Heart left ventricle (tissue), 16 donors: ENCODE measurements at regions of chr17 and their contacts with region 1.

Region 1: GRCh38 chr17:29579866-29580771 is 9.3 kb downstream of the GIT1 start:
- DNase-seq: peak; percentile 79 to 90 (median 85)
- ATAC-seq: peak; percentile 59 to 80 (median 74)
- H3K4me3 ChIP-seq: no peak overlapping the region
- H3K27ac ChIP-seq: peak overlapping the region in 1 of 12 donors; percentile 5
- H3K4me1 ChIP-seq: peaks cover 0 to 43% (median 23%) of the 10 kb centered on the region in 12 donors
- H3K27me3 ChIP-seq: no peaks in the 10 kb centered on the region
- CTCF ChIP-seq: peak; percentile 80 to 95 (median 90)
- POLR2A ChIP-seq: no peak

Region 2: GRCh38 chr17:29611311-29612053 is 31.4 kb after region 1 on chr17:
- intact Hi-C with region 1: loop called in 3 of 10 experiments (anchors 2 to 5 kb)
- DNase-seq: peak in 1 of 5 donors; percentile 46
- ATAC-seq: no peak
- H3K4me3 ChIP-seq: no peak overlapping the region
- H3K27ac ChIP-seq: no peak overlapping the region
- H3K4me1 ChIP-seq: peaks cover 3 to 39% (median 27%) of the 10 kb centered on the region in 12 donors
- H3K27me3 ChIP-seq: no peaks in the 10 kb centered on the region
- CTCF ChIP-seq: no peak
- POLR2A ChIP-seq: no peak

Region 3: GRCh38 chr17:29622337-29623282 is 42.5 kb after region 1 on chr17 and contains the start of gene CORO6:
- intact Hi-C with region 1: loop called in 2 of 10 experiments (anchors 5 kb)
- DNase-seq: peak; percentile 64 to 85 (median 81)
- ATAC-seq: peak; percentile 53 to 71 (median 70)
- H3K4me3 ChIP-seq: peak within 1 kb of the TSS; percentile 51 to 83 (median 72)
- H3K27ac ChIP-seq: peak within 1 kb of the TSS; percentile 28 to 98 (median 88)
- H3K4me1 ChIP-seq: peaks cover 3 to 70% (median 40%) of the 10 kb centered on the region in 12 donors
- H3K27me3 ChIP-seq: no peaks in the 10 kb centered on the region
- CTCF ChIP-seq: no peak
- POLR2A ChIP-seq: peak; percentile 41 to 83
- total RNA-seq, gene CORO6: 72.1 to 115 (median 95.5) TPM

Region 4: GRCh38 chr17:29777663-29778062 is 197.5 kb after region 1 on chr17:
- intact Hi-C with region 1: loop called in 3 of 10 experiments (anchors 5 kb)
- DNase-seq: no peak
- ATAC-seq: no peak
- H3K4me3 ChIP-seq: no peak overlapping the region
- H3K27ac ChIP-seq: no peak overlapping the region
- H3K4me1 ChIP-seq: peaks cover 0 to 21% (median 8%) of the 10 kb centered on the region in 12 donors
- H3K27me3 ChIP-seq: no peaks in the 10 kb centered on the region
- CTCF ChIP-seq: no peak
- POLR2A ChIP-seq: no peak

Region 5: DNA sequence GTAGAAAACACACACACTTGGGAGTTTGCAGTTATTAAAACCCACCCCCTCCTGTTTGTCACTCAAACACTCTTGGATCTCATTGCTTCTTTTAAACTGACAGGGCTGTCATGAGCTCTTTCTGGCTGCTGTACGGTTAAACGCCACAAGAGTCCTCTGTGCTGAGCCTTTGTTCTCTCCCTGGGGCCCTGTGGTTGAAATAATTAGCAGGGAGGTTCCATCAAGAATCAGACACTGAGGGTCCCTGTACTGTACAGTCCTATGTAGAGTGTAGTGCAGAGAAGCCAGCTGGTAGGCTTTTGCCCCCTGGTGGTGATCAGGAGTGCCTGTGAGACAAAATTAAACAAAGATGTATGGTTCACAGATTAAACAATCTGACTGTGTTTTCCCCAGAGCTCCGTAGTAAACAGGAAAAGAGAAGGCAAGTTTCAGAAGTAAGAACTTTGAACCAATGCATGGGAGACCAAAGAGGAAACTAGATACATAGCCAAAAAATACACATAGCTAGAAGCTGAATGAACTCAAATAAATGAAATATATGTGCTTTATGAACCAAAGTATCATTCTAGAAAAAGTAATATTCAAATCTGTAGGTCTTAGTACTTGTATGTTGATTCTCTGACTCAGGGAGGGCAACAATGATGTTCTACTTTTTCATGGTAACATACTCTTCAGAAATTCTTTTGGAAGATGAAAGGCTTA is 351.3 kb after region 1 on chr17:
- intact Hi-C with region 1: loop called in 1 of 10 experiments (anchors 5 kb)
- DNase-seq: peak; percentile 65 to 74 (median 69)
- ATAC-seq: peak; percentile 67 to 84 (median 74)
- H3K4me3 ChIP-seq: peak overlapping the region in 9 of 12 donors; percentile 65 to 95 (median 85)
- H3K27ac ChIP-seq: peak overlapping the region in 4 of 12 donors; percentile 3 to 87 (median 52)
- H3K4me1 ChIP-seq: peaks cover 0 to 40% (median 31%) of the 10 kb centered on the region in 12 donors
- H3K27me3 ChIP-seq: no peaks in the 10 kb centered on the region
- CTCF ChIP-seq: peak; percentile 82 to 93 (median 86)
- POLR2A ChIP-seq: no peak